ENCODE measurements at regions of chr7 and their contacts with region 1.

Region 1: GRCh38 chr7:91940572-91941341 is at the start of gene AKAP9:
- DNase-seq: peak; percentile 85
- ATAC-seq: peak; percentile 91
- H3K4me3 Mint-ChIP-seq: peak within 1 kb of the TSS; percentile 94
- H3K27ac Mint-ChIP-seq: peak within 1 kb of the TSS; percentile 93
- H3K4me1 Mint-ChIP-seq: peaks cover 42% of the 10 kb centered on the region
- H3K27me3 Mint-ChIP-seq: no peaks in the 10 kb centered on the region
- CTCF ChIP-seq: no peak
- total RNA-seq, gene AKAP9: 54.4 and 58.4 TPM in 2 replicates

Region 2: GRCh38 chr7:90403174-90404113 is 1537.3 kb before region 1 on chr7 and contains the start of gene CLDN12:
- CTCF ChIA-PET with region 1: no interaction called
- POLR2A ChIA-PET with region 1: no interaction called
- intact Hi-C with region 1: loop called (anchors 10 kb)
- DNase-seq: peak; percentile 57
- ATAC-seq: peak; percentile 94
- H3K4me3 Mint-ChIP-seq: peak within 1 kb of the TSS; percentile 97
- H3K27ac Mint-ChIP-seq: peak within 1 kb of the TSS; percentile 89
- H3K4me1 Mint-ChIP-seq: peaks cover 15% of the 10 kb centered on the region
- H3K27me3 Mint-ChIP-seq: no peaks in the 10 kb centered on the region
- CTCF ChIP-seq: no peak
- total RNA-seq, gene CLDN12: 6.2 and 9.0 TPM in 2 replicates

Region 3: GRCh38 chr7:91835846-91836368 is 104.8 kb before region 1 on chr7:
- CTCF ChIA-PET with region 1: no interaction called
- POLR2A ChIA-PET with region 1: no interaction called
- intact Hi-C with region 1: loop called (anchors 2 kb)
- DNase-seq: no peak
- ATAC-seq: no peak
- H3K4me3 Mint-ChIP-seq: no peak overlapping the region
- H3K27ac Mint-ChIP-seq: no peak overlapping the region
- H3K4me1 Mint-ChIP-seq: no peaks in the 10 kb centered on the region
- H3K27me3 Mint-ChIP-seq: no peaks in the 10 kb centered on the region
- CTCF ChIP-seq: no peak

Region 4: GRCh38 chr7:91869661-91870060 is 71.1 kb before region 1 on chr7:
- CTCF ChIA-PET with region 1: no interaction called
- POLR2A ChIA-PET with region 1: no interaction called
- intact Hi-C with region 1: no loop called
- DNase-seq: no peak
- ATAC-seq: no peak
- H3K4me3 Mint-ChIP-seq: no peak overlapping the region
- H3K27ac Mint-ChIP-seq: no peak overlapping the region
- H3K4me1 Mint-ChIP-seq: peaks cover 4% of the 10 kb centered on the region
- H3K27me3 Mint-ChIP-seq: no peaks in the 10 kb centered on the region
- CTCF ChIP-seq: no peak

Region 5: DNA sequence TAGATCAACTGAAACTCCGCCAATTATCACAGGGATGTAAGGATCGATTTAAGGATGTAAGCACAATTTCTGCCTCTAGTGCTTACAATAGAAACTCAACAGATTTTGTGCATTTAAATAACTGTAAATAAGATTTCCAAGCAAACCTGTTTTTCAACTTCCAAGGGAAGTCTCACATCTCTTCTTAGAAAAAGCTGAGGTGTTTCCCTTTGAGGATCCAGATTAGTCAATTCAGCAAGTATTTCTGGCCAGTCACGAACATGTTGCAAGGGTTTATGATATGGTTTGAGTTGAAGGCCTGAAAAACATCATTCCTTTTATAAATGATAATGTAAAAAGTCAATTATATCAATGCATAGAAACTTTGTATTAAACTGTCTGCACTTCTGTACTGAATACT is 281.0 kb after region 1 on chr7:
- CTCF ChIA-PET with region 1: no interaction called
- POLR2A ChIA-PET with region 1: no interaction called
- intact Hi-C with region 1: no loop called
- DNase-seq: no peak
- ATAC-seq: no peak
- H3K4me3 Mint-ChIP-seq: no peak overlapping the region
- H3K27ac Mint-ChIP-seq: no peak overlapping the region
- H3K4me1 Mint-ChIP-seq: peaks cover 3% of the 10 kb centered on the region
- H3K27me3 Mint-ChIP-seq: no peaks in the 10 kb centered on the region
- CTCF ChIP-seq: no peak

Region 6: GRCh38 chr7:92245487-92246362 is 305.0 kb after region 1 on chr7 and contains the starts of genes ANKIB1 and KRIT1:
- CTCF ChIA-PET with region 1: no interaction called
- POLR2A ChIA-PET with region 1: interaction called, 3 read pairs
- intact Hi-C with region 1: loop called (anchors 1 kb)
- DNase-seq: peak; percentile 79
- ATAC-seq: peak; percentile 84
- H3K4me3 Mint-ChIP-seq: peak within 1 kb of the TSS; percentile 100
- H3K27ac Mint-ChIP-seq: peak within 1 kb of the TSS; percentile 99
- H3K4me1 Mint-ChIP-seq: peaks cover 40% of the 10 kb centered on the region
- H3K27me3 Mint-ChIP-seq: no peaks in the 10 kb centered on the region
- CTCF ChIP-seq: no peak
- total RNA-seq, gene ANKIB1: 42.5 and 50.6 TPM in 2 replicates
- total RNA-seq, gene KRIT1: 53.4 and 61.1 TPM in 2 replicates

Region 7: GRCh38 chr7:93117852-93118530 is 1177.2 kb after region 1 on chr7 and contains the start of gene SAMD9:
- CTCF ChIA-PET with region 1: no interaction called
- POLR2A ChIA-PET with region 1: no interaction called
- intact Hi-C with region 1: loop called (anchors 10 kb)
- DNase-seq: no peak
- ATAC-seq: peak; percentile 99
- H3K4me3 Mint-ChIP-seq: peak within 1 kb of the TSS; percentile 79
- H3K27ac Mint-ChIP-seq: peak within 1 kb of the TSS; percentile 74
- H3K4me1 Mint-ChIP-seq: peaks cover 46% of the 10 kb centered on the region
- H3K27me3 Mint-ChIP-seq: no peaks in the 10 kb centered on the region
- CTCF ChIP-seq: no peak
- total RNA-seq, gene SAMD9: 24.4 and 26.3 TPM in 2 replicates

Measured in activated B cell treated with CpG ODN at 0.5 μM for 24 hours (primary cell).